Mucosa of descending colon (tissue), 3 donors: ENCODE measurements at regions of chr11 and their contacts with region 1.

Region 1: DNA sequence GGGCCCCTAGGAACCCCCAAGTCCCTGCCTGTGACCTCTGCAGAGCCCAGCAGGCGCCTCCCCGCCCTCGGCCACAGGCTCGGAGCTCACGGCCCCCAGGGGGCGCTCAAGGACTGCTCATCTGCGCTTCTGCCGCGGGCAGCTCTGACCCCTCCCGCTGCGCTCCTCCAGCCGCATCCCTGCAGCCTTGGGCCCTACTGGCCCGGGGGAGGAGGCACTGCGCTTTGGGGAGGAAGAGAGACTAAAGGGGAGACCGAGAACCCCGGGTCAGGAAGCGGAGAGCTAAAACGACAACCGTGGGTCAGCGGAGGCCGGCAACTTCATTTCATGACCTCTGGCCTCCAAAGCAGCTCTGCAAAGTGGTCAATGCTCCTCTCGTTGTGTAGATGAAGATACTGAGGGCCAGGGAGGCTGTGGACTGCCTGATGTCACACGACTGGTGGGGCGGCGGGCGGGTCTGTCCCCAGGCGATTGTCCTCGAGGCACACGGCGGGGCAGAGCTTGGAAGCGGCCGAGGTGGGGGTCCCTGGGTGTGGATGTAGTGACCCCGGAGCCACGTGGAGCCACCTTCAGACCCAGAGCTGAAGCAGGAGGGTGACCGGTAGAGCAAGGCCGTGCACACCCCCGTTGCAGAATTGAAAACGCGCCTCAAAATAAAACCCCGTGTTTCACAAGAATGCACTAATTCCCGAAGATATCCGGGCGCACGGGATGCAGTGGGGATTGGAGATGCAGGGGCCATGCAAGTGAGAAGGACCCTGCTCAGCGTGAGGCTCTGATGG is 2.7 kb upstream of the KRTAP5-6 start:
- DNase-seq: peak; percentile 88 to 95 (median 93)
- ATAC-seq: peak; percentile 97
- H3K4me3 ChIP-seq: no peak overlapping the region
- H3K4me1 ChIP-seq: peaks cover 6% of the 10 kb centered on the region
- CTCF ChIP-seq: peak; percentile 94

Region 2: DNA sequence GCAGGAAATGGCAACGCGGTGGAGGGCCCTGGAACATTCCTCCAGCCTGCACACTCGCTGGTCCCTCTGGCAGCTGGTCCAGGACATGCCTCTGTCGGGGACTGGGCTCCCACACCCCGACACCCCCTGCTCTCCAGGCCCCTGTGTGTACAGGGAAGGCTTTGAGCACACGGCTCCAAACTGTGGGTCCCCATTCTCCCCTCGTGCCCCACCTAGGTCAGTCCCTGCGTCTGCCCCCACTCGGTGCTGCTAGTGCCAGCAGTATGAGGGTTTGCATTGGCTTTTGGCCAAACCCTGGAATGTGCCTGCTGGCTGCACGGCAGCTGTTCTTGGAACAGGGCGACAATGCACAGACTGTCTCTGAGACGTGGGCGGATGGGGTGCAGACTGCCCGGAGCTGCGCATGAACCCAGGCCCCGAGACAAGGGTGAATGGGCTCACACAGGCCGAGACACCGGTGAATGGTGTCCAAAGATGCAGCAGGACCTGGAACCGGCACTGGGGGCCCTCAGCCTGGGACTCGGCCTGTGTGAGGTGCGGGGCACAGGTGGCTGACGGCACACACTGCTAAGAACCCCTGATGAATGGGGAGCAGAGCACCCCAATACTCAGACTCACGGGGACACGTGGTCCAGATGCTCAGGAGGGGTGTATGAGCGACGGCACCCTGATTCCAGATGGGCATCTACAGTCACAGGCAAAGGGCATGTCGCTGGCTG is 133.0 kb after region 1 on chr11:
- intact Hi-C with region 1: loop called (anchors 2 to 5 kb)
- DNase-seq: peak; percentile 64 to 75 (median 72)
- ATAC-seq: peak; percentile 54
- H3K4me3 ChIP-seq: no peak overlapping the region
- H3K4me1 ChIP-seq: peaks cover 23% of the 10 kb centered on the region
- CTCF ChIP-seq: no peak